GM23248 (cell line): ENCODE measurements at regions of chr3 and their contacts with region 1.

Region 1: GRCh38 chr3:154095832-154096421 is 25.3 kb upstream of the ARHGEF26 start:
- DNase-seq: peak; percentile 53
- H3K4me3 ChIP-seq: no peak overlapping the region
- H3K27ac ChIP-seq: no peak overlapping the region
- H3K4me1 ChIP-seq: no peaks in the 10 kb centered on the region
- H3K27me3 ChIP-seq: no peaks in the 10 kb centered on the region

Region 2: DNA sequence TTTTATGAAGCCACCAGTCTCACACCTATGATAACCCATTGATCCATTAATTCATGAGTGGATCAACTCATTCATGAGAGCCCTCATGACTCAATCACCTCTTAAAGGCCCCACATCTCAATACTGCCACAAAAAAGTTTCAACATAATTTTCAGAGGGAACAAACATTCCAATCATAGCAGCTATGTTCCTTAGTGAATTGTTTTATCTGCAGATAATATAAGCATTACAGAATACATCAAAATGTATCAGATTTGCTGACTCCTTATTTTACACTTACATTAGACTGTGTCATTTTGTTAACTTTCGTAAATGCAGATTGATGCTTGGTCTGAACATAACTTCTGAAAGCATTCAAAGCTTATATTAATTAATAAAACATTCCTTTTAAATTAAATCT is 1982.5 kb before region 1 on chr3:
- in situ Hi-C with region 1: no loop called
- DNase-seq: peak; percentile 27
- H3K4me3 ChIP-seq: no peak overlapping the region
- H3K27ac ChIP-seq: no peak overlapping the region
- H3K4me1 ChIP-seq: peaks cover 8% of the 10 kb centered on the region; the same call in 1 of the 2 replicates
- H3K27me3 ChIP-seq: no peaks in the 10 kb centered on the region

Region 3: DNA sequence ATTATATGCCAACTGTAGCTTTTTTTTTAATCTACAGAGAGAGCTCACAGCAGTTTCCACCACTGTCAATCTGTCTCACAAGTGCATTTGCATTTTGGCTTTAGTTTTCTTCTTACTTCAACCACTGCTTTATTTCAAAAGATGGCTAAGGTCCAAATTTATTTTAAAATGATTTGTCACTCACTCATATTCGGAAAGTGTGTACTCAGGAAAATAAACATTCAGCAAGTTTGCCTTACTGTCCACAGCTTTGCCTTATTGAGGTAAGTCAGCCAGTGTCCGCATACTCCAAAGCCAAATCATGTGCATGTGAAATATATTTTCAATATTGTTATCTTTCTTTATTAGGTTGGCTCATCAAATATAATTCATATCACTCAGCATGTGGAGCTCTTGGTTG is 215.4 kb before region 1 on chr3:
- in situ Hi-C with region 1: no loop called
- DNase-seq: no peak
- H3K4me3 ChIP-seq: no peak overlapping the region
- H3K27ac ChIP-seq: no peak overlapping the region
- H3K4me1 ChIP-seq: no peaks in the 10 kb centered on the region
- H3K27me3 ChIP-seq: no peaks in the 10 kb centered on the region

Region 4: GRCh38 chr3:154252759-154253638 is 157.1 kb after region 1 on chr3:
- in situ Hi-C with region 1: loop called (anchors 5 kb)
- DNase-seq: peak; percentile 93
- H3K4me3 ChIP-seq: peak overlapping the region; percentile 41; the same call in 1 of the 2 replicates
- H3K27ac ChIP-seq: no peak overlapping the region
- H3K4me1 ChIP-seq: no peaks in the 10 kb centered on the region
- H3K27me3 ChIP-seq: no peaks in the 10 kb centered on the region

Region 5: DNA sequence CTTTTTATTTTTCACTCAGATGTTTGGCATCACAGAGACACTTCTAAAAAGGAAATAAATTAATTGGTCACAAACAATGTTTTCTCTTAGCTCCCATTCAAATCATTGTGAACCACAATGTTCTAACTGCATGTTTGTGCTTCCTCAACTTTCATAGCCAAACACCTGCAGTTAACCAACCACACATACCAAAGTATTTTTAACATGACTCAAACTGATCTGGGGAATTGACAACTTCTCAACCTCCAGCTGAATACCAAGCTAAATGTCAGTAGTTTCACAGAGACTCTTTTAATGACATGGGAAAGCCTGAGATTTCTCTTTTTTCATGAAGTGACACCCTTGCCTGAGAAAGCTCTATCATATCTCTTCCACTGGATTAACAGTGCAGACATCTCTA is 766.3 kb after region 1 on chr3:
- in situ Hi-C with region 1: no loop called
- DNase-seq: peak; percentile 5
- H3K4me3 ChIP-seq: no peak overlapping the region
- H3K27ac ChIP-seq: no peak overlapping the region
- H3K4me1 ChIP-seq: peaks cover 4% of the 10 kb centered on the region; the same call in 1 of the 2 replicates
- H3K27me3 ChIP-seq: no peaks in the 10 kb centered on the region